Breast epithelium (tissue), 4 donors: ENCODE measurements at regions of chr2 and their contacts with region 1.

Region 1: GRCh38 chr2:205858881-205859441 is 176.7 kb downstream of the NRP2 start:
- DNase-seq: no peak
- H3K4me3 ChIP-seq: peak overlapping the region in 1 of 3 donors; percentile 16
- H3K27ac ChIP-seq: no peak overlapping the region
- H3K4me1 ChIP-seq: no peaks in the 10 kb centered on the region
- H3K27me3 ChIP-seq: no peaks in the 10 kb centered on the region
- CTCF ChIP-seq: no peak
- POLR2A ChIP-seq: no peak

Region 2: DNA sequence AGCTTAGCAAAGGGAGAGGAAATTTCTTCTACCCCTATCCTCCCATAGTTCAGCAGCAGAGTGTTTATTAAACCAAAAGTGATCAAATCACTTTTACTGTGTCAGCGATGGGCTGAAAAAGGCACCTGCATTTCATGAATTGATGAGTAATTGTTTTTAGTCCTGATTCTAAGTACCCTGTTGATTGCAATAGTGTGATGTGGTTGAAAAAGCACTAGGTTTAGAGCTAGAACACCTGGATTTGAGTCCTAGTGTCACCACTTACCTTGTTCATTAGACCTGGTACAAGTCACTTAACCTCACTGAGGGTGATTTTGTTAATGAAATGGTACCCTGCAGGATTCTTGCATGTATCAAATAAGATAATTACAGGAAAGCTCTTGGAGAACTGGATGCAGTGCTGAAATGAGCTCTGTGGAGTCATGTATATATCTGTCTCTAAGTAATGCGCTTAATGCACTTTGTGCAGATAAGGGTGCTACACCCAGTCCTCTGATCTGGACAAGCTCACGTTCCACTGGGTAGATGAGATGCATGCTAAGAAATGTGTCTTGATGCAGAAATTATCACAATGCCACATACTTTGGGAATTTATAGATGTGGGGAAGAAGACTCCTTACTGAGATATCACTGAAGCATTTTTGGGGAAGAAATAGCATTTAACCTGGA is 1024.1 kb before region 1 on chr2:
- intact Hi-C with region 1: loop called (anchors 5 kb)
- DNase-seq: no peak
- H3K4me3 ChIP-seq: no peak overlapping the region
- H3K27ac ChIP-seq: no peak overlapping the region
- H3K4me1 ChIP-seq: no peaks in the 10 kb centered on the region
- H3K27me3 ChIP-seq: no peaks in the 10 kb centered on the region
- CTCF ChIP-seq: no peak
- POLR2A ChIP-seq: no peak

Region 3: GRCh38 chr2:205785507-205786260 is 73.3 kb before region 1 on chr2:
- intact Hi-C with region 1: no loop called
- DNase-seq: no peak
- H3K4me3 ChIP-seq: no peak overlapping the region
- H3K27ac ChIP-seq: peak overlapping the region; percentile 36 to 43
- H3K4me1 ChIP-seq: no peaks in the 10 kb centered on the region
- H3K27me3 ChIP-seq: no peaks in the 10 kb centered on the region
- CTCF ChIP-seq: no peak
- POLR2A ChIP-seq: no peak

Region 4: GRCh38 chr2:207334624-207335371 is 1475.8 kb after region 1 on chr2:
- intact Hi-C with region 1: no loop called
- DNase-seq: peak in 1 of 2 donors; percentile 72
- H3K4me3 ChIP-seq: peak overlapping the region; percentile 15 to 59 (median 39)
- H3K27ac ChIP-seq: peak overlapping the region; percentile 86 to 92
- H3K4me1 ChIP-seq: no peaks in the 10 kb centered on the region
- H3K27me3 ChIP-seq: no peaks in the 10 kb centered on the region
- CTCF ChIP-seq: no peak
- POLR2A ChIP-seq: no peak